ENCODE measurements at regions of chr13 and their contacts with region 1.

Region 1: DNA sequence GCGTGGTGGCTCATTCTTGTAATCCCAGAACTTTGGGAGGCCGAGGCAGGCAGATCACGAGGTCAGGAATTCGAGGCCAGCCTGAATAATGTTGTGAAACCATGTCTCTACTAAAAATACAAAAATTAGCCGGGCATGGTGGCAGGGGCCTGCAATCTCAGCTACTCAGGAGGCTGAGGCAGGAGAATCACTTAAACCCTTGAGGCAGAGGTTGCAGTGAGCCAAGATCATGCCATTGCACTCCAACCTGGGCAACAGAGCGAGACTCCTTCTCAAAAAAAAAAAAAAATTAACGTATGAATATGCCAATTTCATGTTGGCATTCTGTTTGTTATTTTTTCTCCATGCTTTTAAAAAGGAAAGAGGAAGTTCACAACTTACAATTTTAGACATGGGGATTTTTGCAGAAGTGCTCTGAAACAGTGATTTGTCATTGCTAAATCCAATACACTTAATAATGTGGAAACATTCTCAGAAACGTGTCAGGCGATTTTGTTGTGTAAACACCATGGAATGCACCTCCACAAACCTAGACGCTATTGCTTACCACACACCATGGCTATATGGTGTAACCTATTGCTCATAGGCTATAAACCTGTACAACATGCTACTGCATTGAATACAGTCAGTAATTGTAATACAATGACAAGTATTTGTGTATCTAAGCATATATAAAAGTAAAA is 115.9 kb upstream of the PCDH20 start:
- DNase-seq: peak; percentile 17
- ATAC-seq: peak; percentile 92
- H3K4me3 ChIP-seq: no peak overlapping the region
- H3K27ac ChIP-seq: no peak overlapping the region
- H3K4me1 ChIP-seq: no peaks in the 10 kb centered on the region
- H3K27me3 ChIP-seq: no peaks in the 10 kb centered on the region
- CTCF ChIP-seq: no peak
- EP300 ChIP-seq: no peak
- POLR2A ChIP-seq: no peak
- RAD21 ChIP-seq: no peak

Region 2: DNA sequence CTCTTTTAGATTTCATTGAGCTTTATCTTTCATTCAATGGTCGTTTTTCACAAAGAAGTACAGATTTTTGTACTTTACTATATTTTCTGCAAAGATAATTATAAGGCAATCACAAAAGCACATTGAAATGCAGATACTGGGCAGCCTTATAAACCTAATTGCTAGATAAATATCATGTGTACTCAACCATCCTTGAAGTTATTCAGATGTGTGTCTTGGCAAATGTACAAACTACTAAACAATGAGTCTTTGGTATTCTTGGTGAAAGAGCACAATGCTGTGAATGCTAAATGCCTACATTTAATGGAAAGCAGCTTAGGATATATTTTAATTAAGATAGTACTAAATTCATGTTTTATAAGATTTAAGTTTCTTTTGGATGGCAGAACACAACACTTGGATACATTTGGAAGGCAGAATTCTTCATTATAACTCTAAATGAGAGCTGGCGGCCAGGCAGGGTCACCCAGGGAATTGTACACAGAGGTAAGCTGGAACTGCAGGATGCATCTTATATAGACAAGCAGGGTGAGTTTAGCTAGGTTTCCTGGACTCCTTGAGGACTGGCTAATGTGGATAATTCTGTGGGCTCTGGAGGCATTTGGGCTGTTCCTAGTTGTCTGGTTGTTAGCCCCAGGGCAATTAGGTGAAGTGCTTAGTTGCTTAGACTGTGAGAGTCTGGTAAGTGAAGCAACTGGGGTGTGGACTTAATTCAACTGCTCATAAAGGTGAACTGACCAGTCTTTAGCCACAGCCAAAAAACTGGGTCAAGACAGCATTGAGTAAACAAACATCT is 402.5 kb before region 1 on chr13:
- CTCF ChIA-PET with region 1: no interaction called
- POLR2A ChIA-PET with region 1: no interaction called
- RAD21 ChIA-PET with region 1: no interaction called
- SMC1A ChIA-PET with region 1: no interaction called
- in situ Hi-C with region 1: no loop called
- intact Hi-C with region 1: loop called (anchors 10 kb)
- DNase-seq: no peak
- ATAC-seq: no peak
- H3K4me3 ChIP-seq: no peak overlapping the region
- H3K27ac ChIP-seq: no peak overlapping the region
- H3K4me1 ChIP-seq: no peaks in the 10 kb centered on the region
- H3K27me3 ChIP-seq: no peaks in the 10 kb centered on the region
- CTCF ChIP-seq: no peak
- EP300 ChIP-seq: no peak
- POLR2A ChIP-seq: no peak
- RAD21 ChIP-seq: no peak

Region 3: DNA sequence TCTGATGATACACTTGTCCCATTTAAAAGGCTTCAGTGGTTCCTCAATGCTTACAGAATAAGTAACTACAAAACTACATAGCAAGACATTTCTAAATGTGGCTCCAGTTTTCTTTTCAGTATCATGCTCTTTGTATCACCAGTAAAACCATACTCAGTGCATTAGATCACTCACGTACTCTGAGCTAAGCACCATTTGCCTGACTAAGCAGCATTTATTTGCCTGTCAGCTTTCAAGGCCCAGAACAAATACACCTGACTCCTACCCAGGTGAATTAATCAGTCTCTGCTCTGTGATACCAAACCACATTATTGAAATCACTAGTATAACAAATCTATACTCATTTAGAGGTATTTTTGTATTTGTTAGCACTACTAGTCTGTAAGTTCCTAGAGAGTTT is 68.5 kb before region 1 on chr13:
- CTCF ChIA-PET with region 1: no interaction called
- POLR2A ChIA-PET with region 1: no interaction called
- RAD21 ChIA-PET with region 1: no interaction called
- SMC1A ChIA-PET with region 1: no interaction called
- in situ Hi-C with region 1: no loop called
- intact Hi-C with region 1: no loop called
- DNase-seq: no peak
- ATAC-seq: no peak
- H3K4me3 ChIP-seq: no peak overlapping the region
- H3K27ac ChIP-seq: no peak overlapping the region
- H3K4me1 ChIP-seq: no peaks in the 10 kb centered on the region
- H3K27me3 ChIP-seq: no peaks in the 10 kb centered on the region
- CTCF ChIP-seq: no peak
- EP300 ChIP-seq: no peak
- POLR2A ChIP-seq: no peak
- RAD21 ChIP-seq: no peak